ENCODE measurements at regions of chr7 and their contacts with region 1.

Region 1: DNA sequence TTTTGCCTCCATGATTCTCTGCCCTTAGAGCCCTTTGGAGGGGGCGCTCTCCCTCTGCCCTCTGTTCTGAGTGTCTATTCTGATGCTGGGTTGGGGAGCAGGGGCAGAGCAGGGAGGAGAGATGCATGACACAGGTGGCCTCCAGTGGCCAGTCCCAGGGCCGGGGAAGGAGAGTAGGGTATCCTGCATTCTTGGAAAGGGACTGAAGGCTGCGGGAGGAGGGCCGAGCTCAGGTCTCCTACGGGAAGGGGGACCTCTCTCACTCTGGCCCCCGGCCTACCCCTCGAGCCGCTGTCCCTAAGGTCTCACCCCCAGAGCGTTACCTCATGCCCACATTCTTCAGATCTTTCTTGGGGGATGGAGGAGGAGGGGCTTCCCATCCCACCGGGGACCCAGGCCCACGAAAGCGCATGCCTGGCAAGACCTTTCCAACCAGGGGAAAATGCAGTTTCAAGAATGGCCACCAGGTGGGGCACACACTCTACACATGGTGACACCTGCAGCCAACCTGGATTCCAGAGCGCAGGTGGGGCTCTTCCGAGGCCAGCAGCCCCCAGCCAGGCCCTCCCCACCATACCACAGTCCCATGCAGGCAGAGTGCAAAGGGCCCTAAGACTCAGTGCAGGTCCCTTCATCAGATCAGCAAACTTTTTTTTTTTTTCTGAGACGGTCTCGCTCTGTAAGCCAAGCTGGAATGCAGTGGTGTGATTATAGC is 86.4 kb downstream of the MYL10 start:
- DNase-seq: peak; percentile 50 to 84 (median 72)
- ATAC-seq: peak; percentile 65
- H3K4me3 ChIP-seq: no peak overlapping the region
- H3K4me3 Mint-ChIP-seq: no peak overlapping the region
- H3K27ac ChIP-seq: no peak overlapping the region
- H3K27ac Mint-ChIP-seq: no peak overlapping the region
- H3K4me1 ChIP-seq: no peaks in the 10 kb centered on the region
- H3K4me1 Mint-ChIP-seq: peaks cover 6% of the 10 kb centered on the region
- H3K27me3 ChIP-seq: no peaks in the 10 kb centered on the region
- H3K27me3 Mint-ChIP-seq: no peaks in the 10 kb centered on the region
- CTCF ChIP-seq: peak; percentile 86

Region 2: GRCh38 chr7:101602484-101603241 is 60.0 kb after region 1 on chr7:
- CTCF ChIA-PET with region 1: interaction called, 3 read pairs
- POLR2A ChIA-PET with region 1: no interaction called
- intact Hi-C with region 1: loop called in 1 of 2 experiments (anchors 2 kb)
- DNase-seq: peak; percentile 48 to 80 (median 69)
- ATAC-seq: peak; percentile 69
- H3K4me3 ChIP-seq: no peak overlapping the region
- H3K4me3 Mint-ChIP-seq: no peak overlapping the region
- H3K27ac ChIP-seq: no peak overlapping the region
- H3K27ac Mint-ChIP-seq: no peak overlapping the region
- H3K4me1 ChIP-seq: no peaks in the 10 kb centered on the region
- H3K4me1 Mint-ChIP-seq: no peaks in the 10 kb centered on the region
- H3K27me3 ChIP-seq: no peaks in the 10 kb centered on the region
- H3K27me3 Mint-ChIP-seq: no peaks in the 10 kb centered on the region
- CTCF ChIP-seq: peak; percentile 84

Region 3: GRCh38 chr7:102236592-102237287 is 694.1 kb after region 1 on chr7:
- CTCF ChIA-PET with region 1: no interaction called
- POLR2A ChIA-PET with region 1: no interaction called
- intact Hi-C with region 1: loop called (anchors 1 kb)
- DNase-seq: peak in 7 of 9 experiments; percentile 9 to 55 (median 38)
- ATAC-seq: no peak
- H3K4me3 ChIP-seq: no peak overlapping the region
- H3K4me3 Mint-ChIP-seq: no peak overlapping the region
- H3K27ac ChIP-seq: no peak overlapping the region
- H3K27ac Mint-ChIP-seq: no peak overlapping the region
- H3K4me1 ChIP-seq: no peaks in the 10 kb centered on the region
- H3K4me1 Mint-ChIP-seq: no peaks in the 10 kb centered on the region
- H3K27me3 ChIP-seq: no peaks in the 10 kb centered on the region
- H3K27me3 Mint-ChIP-seq: no peaks in the 10 kb centered on the region
- CTCF ChIP-seq: peak; percentile 52

Region 4: DNA sequence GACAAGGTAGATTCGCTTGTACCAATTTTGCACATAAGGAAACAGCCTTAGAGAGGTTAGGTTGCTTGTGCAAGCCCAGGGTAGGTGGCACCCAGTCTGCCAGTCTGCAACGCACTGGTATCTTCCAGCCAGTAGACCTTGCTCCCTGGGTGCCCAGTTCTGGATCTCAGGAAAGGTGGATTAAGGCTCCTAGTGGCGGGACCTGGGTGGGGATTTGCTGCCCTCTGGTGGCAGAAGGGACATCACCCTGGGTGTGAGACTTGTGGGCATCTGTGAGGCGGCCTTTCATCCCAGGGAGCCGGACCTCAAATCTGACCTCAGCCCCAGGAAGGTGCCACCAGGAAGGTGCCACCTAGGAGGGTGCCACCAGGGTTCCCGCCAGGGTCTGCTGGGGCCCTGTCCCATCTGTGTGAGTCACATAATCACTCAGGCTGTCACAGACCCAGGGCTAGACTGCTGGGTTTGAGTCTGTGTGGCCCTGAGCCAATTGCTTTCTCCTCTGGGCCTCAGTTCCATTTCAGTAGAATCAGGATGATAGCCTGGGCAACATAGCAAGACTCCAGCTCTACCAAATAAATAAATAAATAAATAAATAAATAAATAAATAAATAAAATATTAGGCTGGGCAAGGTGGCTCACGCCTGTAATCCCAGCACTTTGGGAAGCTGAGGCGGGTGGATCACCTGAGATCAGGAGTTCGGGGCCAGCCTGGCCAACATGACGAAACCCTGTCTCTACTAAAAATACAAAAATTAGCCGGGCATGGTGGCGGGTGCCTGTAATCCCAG is 848.2 kb after region 1 on chr7:
- CTCF ChIA-PET with region 1: interaction called, 3 read pairs
- POLR2A ChIA-PET with region 1: no interaction called
- intact Hi-C with region 1: loop called (anchors 2 to 10 kb)
- DNase-seq: peak; percentile 34 to 81 (median 70)
- ATAC-seq: peak; percentile 71
- H3K4me3 ChIP-seq: no peak overlapping the region
- H3K4me3 Mint-ChIP-seq: no peak overlapping the region
- H3K27ac ChIP-seq: no peak overlapping the region
- H3K27ac Mint-ChIP-seq: no peak overlapping the region
- H3K4me1 ChIP-seq: peaks cover 4% of the 10 kb centered on the region
- H3K4me1 Mint-ChIP-seq: peaks cover 5% of the 10 kb centered on the region
- H3K27me3 ChIP-seq: no peaks in the 10 kb centered on the region
- H3K27me3 Mint-ChIP-seq: no peaks in the 10 kb centered on the region
- CTCF ChIP-seq: peak; percentile 82